HEK293 (cell line): ENCODE measurements at regions of chr11 and their contacts with region 1.

Region 1: GRCh38 chr11:126716456-126717083 is 284.0 kb downstream of the KIRREL3 start:
- H3K4me3 ChIP-seq: no peak overlapping the region
- H3K27ac ChIP-seq: no peak overlapping the region
- H3K4me1 ChIP-seq: no peaks in the 10 kb centered on the region
- CTCF ChIP-seq: no peak

Region 2: GRCh38 chr11:126704096-126704495 is 12.5 kb before region 1 on chr11:
- CTCF ChIA-PET with region 1: interaction called, 21 read pairs
- POLR2A ChIA-PET with region 1: no interaction called
- H3K4me3 ChIP-seq: no peak overlapping the region
- H3K27ac ChIP-seq: no peak overlapping the region
- H3K4me1 ChIP-seq: no peaks in the 10 kb centered on the region
- CTCF ChIP-seq: no peak

Region 3: GRCh38 chr11:126989942-126990715 is 273.6 kb after region 1 on chr11:
- CTCF ChIA-PET with region 1: interaction called, 25 read pairs
- POLR2A ChIA-PET with region 1: no interaction called
- H3K4me3 ChIP-seq: no peak overlapping the region
- H3K27ac ChIP-seq: no peak overlapping the region
- H3K4me1 ChIP-seq: no peaks in the 10 kb centered on the region
- CTCF ChIP-seq: peak; percentile 56; the same call in 1 of the 2 replicates